Posterior cingulate gyrus (tissue), 11 donors: ENCODE measurements at regions of chr20 and their contacts with region 1.

Region 1: DNA sequence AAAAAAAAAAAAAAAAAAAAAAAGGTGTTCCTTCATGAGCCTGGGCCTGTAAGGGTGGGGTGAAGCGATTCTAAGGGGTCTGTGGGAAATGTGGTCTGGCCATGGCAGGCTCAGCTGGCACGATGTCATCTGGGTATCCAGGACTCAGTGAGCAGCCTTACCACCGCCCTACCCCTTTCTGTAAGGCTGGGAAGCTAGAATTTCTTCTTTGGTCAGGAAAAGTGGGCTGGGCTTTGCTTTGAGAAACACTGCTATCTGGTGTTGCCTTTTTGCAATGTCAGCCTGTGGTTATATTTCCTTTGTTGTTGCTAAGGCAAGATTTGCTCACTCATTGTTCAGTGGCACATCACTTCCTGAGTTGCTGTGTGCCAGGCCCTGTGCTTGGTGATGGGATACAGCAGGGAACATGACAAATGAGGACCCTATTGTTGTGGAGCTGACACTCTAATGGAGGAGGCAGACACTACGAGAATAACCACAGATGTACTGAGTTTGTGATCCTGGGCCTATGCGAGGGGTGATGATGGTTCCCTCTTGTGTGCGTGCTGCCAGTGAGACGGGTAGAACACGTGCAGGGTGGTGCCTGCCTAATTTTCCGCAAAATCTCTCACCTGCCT is 45.9 kb upstream of the ZNFX1 start:
- DNase-seq: no peak

Region 2: DNA sequence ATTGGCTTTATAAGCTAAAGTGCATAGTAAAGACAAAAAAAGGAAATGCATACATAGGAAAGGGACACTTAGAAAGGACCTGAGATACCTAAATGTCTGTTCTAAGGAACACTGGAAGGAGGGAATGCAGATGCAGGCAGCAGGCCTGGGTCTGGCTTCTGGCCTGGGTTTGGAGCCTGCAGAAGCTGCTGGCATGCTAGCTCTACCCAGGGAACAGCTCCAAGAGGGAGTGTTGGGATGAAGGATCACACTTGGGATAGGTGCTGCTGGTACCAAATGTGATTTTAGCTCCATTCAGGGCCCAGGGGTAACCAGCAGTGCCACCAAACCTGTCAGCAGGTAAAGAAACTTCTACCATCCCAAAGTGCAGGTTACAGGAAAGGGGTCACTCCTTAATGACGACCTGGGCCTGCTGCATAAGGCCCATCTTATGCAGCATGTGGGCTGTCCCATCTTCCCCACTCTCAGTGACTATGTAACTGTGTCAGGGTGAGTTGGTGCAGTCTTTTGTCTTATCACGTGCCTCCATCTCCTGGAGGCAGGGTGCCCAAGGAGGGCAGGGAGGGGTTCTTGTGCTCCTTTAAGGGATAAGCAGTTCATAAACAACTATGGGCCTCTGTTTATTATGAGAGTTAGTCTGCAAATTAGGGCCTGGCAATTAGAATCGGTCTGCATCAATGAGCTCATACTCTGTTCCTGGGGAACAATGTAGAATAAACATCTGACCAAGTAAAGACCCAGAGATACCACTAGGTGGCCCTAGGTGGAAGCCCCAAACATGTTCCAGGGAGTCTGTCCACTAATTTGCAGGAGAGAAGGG is 77.6 kb before region 1 on chr20:
- intact Hi-C with region 1: loop called (anchors 5 kb)
- DNase-seq: peak in 8 of 10 donors; percentile 29 to 92 (median 38)

Region 3: GRCh38 chr20:49372095-49372726 is 48.5 kb after region 1 on chr20:
- intact Hi-C with region 1: no loop called
- DNase-seq: no peak